ENCODE measurements at regions of chr2 and their contacts with region 1.

Region 1: DNA sequence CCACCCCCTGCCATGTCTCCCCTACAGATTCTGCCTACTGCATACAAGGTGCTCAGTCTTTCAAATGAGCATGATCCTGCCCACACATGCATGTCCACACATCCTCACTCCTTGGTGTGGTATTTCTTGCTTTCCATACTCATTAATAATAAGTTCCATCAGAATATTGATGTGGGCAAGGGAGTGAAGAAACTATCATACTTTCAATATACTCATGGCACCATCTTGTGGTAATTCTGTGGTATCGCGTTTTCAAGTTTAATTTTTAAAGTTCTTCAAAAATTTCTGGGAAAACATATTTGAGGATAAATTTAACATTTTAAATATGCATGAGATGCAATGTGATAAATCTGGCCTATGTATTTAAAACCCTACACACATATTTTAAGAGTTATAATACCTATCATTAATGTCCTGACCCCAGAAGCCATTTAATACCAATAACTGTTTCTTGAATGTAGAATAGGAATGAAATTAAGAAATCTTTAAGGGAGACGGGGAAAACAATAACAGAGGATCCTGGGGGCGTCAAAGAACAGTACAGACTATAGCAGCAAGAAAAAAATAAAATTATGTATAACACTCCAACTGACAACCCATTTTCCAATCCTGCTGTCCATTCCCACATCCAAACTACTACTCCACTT is 110.1 kb downstream of the ZNF385B start:
- DNase-seq: no peak
- ATAC-seq: peak in 3 of 4 donors; percentile 54 to 73 (median 63)
- H3K4me3 ChIP-seq: no peak overlapping the region
- H3K27ac ChIP-seq: no peak overlapping the region
- H3K4me1 ChIP-seq: no peaks in the 10 kb centered on the region
- H3K27me3 ChIP-seq: no peaks in the 10 kb centered on the region
- CTCF ChIP-seq: peak; percentile 72

Region 2: GRCh38 chr2:178404368-178404767 is 1346.9 kb before region 1 on chr2:
- intact Hi-C with region 1: loop called in 1 of 2 experiments (anchors 5 kb)
- DNase-seq: peak; percentile 35 to 57
- ATAC-seq: peak; percentile 86 to 96 (median 91)
- H3K4me3 ChIP-seq: no peak overlapping the region
- H3K27ac ChIP-seq: peak overlapping the region; percentile 18
- H3K4me1 ChIP-seq: no peaks in the 10 kb centered on the region
- H3K27me3 ChIP-seq: no peaks in the 10 kb centered on the region
- CTCF ChIP-seq: no peak

Region 3: GRCh38 chr2:179059026-179059700 is 692.1 kb before region 1 on chr2:
- intact Hi-C with region 1: no loop called
- DNase-seq: no peak
- ATAC-seq: no peak
- H3K4me3 ChIP-seq: no peak overlapping the region
- H3K27ac ChIP-seq: no peak overlapping the region
- H3K4me1 ChIP-seq: no peaks in the 10 kb centered on the region
- H3K27me3 ChIP-seq: no peaks in the 10 kb centered on the region
- CTCF ChIP-seq: no peak

Region 4: GRCh38 chr2:179226203-179226960 is 524.9 kb before region 1 on chr2:
- intact Hi-C with region 1: loop called (anchors 5 to 10 kb)
- DNase-seq: no peak
- ATAC-seq: peak in 1 of 4 donors; percentile 55
- H3K4me3 ChIP-seq: no peak overlapping the region
- H3K27ac ChIP-seq: no peak overlapping the region
- H3K4me1 ChIP-seq: peaks cover 17% of the 10 kb centered on the region
- H3K27me3 ChIP-seq: no peaks in the 10 kb centered on the region
- CTCF ChIP-seq: no peak

Region 5: DNA sequence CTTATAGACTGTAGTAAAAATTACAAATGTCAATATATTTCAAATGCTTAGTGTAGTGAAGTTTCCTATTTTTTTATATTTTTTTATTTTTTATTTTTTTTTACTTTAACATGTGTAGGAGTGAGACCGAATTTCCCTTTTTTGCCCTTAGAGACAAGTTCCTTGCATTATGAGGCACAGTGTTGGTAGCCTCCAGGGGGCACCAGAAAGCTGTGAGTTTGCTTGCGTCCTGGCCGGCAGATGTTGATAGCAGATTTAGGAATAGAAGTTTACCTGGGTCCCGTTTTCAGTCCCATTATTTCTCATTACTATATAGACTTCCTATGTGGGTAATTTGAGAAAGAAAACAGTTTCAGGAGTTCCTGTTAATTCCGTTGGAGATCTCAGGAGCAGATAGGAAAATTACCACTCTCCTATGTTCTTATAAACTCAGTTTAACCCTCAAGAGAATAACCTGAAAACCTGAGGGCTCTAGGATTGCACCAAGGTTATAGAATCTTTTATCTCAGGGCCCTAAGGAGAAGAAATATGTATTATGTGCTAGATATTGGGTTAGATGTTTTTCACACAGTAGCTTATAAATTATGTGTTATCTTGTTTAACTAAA is 329.1 kb before region 1 on chr2:
- intact Hi-C with region 1: loop called (anchors 2 kb)
- DNase-seq: peak; percentile 64 to 76
- ATAC-seq: peak; percentile 46 to 91 (median 76)
- H3K4me3 ChIP-seq: no peak overlapping the region
- H3K27ac ChIP-seq: no peak overlapping the region
- H3K4me1 ChIP-seq: no peaks in the 10 kb centered on the region
- H3K27me3 ChIP-seq: no peaks in the 10 kb centered on the region
- CTCF ChIP-seq: peak; percentile 82

Region 6: DNA sequence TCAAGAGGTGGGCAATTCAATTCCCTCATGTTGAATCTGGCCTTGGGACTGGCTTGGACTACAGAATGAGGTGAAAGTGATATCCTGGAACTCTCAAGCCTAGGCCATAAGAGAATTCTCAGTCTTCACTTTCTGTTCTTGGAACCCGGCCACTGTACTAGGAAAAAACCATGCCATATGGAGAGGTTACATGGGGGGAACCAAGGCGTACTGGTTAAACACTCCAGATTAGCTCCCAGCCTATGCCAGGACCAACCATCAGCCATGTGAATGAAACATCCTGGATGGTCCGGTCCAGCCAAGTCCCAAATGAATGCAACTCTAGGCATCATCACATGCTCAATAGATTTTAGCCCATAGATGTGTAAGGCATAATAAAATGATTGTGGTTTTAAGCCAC is 53.7 kb after region 1 on chr2:
- intact Hi-C with region 1: no loop called
- DNase-seq: no peak
- ATAC-seq: no peak
- H3K4me3 ChIP-seq: no peak overlapping the region
- H3K27ac ChIP-seq: no peak overlapping the region
- H3K4me1 ChIP-seq: no peaks in the 10 kb centered on the region
- H3K27me3 ChIP-seq: no peaks in the 10 kb centered on the region
- CTCF ChIP-seq: no peak